MCF 10A (cell line): ENCODE measurements at regions of chr14 and their contacts with region 1.

Region 1: DNA sequence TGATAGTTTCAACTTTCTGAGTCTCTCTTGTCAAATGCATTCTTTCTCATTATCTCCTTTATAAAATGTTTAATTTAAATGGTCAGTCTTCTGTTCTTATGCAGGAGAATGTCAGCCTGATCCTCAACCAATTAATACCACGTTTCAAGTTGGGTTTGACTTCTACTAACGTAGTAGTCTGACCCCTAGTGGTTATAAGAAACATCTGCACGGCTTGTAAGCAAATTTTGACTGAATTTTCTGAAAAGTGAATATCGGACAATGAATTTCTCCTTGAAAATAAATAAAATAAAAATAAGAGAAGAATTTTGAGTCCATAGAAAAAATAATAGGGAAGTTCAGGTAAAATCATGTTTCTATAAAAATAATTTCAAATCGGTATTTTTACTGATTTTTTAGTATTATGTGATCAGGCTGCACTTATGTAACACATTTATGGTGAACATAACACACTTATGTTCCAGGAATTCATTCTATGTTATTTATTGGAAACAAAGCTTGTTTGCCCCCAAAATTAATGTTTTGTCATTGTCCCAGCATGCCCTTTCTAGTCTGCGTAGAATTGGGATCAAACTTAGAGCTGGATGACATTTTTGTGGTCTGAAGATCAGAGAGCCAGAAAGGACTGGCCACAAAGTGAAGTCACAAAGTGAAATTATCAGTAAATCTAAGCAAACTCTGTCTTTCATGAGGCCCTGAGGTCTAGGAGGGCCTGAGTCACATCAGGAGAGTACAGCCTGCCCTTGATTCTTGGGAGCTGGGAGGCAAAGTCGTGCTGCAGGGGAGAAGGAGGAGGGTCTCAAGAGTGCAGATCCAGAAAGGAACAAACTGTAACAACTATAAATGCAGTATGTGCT is 101.2 kb upstream of the STXBP6 start:
- DNase-seq: peak; percentile 1
- H3K4me3 Mint-ChIP-seq: no peak overlapping the region
- H3K27ac Mint-ChIP-seq: no peak overlapping the region
- H3K4me1 Mint-ChIP-seq: no peaks in the 10 kb centered on the region
- H3K27me3 Mint-ChIP-seq: no peaks in the 10 kb centered on the region
- CTCF ChIP-seq: peak; percentile 69

Region 2: DNA sequence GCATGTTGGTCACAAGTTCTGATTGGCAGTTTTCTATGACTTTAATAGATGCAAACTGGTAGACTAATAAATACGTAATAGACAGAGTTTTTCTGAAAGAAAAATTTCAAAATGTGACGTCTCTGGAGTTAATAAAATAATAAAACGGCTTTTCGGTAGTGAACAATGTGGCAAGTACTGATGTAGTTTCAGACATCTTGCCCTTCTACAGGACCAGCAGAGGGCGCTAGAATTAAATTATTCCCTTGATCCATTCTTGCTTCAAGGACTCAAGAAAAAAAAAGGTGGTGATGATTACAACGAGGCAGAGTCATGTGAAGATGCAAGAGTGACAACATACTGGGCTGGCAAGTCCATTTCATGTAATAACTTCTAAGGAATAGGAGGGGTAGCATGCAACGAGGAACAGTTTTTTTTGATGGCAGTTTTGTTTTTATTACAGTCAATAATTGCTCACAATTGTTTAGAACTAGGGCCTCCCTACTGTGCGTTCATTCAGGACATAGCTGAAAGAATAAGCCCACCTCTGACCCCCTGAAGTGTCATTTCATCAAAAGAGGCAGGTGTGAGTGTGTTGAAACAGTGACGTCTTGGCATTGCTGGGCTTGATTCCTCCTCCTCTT is 416.2 kb before region 1 on chr14:
- CTCF ChIA-PET with region 1: no interaction called
- POLR2A ChIA-PET with region 1: no interaction called
- intact Hi-C with region 1: loop called (anchors 5 kb)
- DNase-seq: peak; percentile 17
- H3K4me3 Mint-ChIP-seq: no peak overlapping the region
- H3K27ac Mint-ChIP-seq: no peak overlapping the region
- H3K4me1 Mint-ChIP-seq: no peaks in the 10 kb centered on the region
- H3K27me3 Mint-ChIP-seq: no peaks in the 10 kb centered on the region
- CTCF ChIP-seq: peak; percentile 55

Region 3: GRCh38 chr14:24806061-24806678 is 345.0 kb before region 1 on chr14:
- CTCF ChIA-PET with region 1: no interaction called
- POLR2A ChIA-PET with region 1: no interaction called
- intact Hi-C with region 1: loop called (anchors 1 kb)
- DNase-seq: no peak
- H3K4me3 Mint-ChIP-seq: no peak overlapping the region
- H3K27ac Mint-ChIP-seq: no peak overlapping the region
- H3K4me1 Mint-ChIP-seq: no peaks in the 10 kb centered on the region
- H3K27me3 Mint-ChIP-seq: no peaks in the 10 kb centered on the region
- CTCF ChIP-seq: peak; percentile 69